Activated T-helper 1 cell treated with anti-CD3 and anti-CD28 coated beads, Interleukin-12 subunit alpha, Interleukin-12 subunit beta, Interleukin-2, Interleukin-4 antibody, amounts not matched to agents 30 ng/mL and 10 ng/mL and 1 ng/mL, durations not matched to agents 14 hours and 24 hours and 36 hours (primary cell): ENCODE measurements at regions of chr19 and their contacts with region 1.

Region 1: GRCh38 chr19:18542936-18543815 is at the start of gene FKBP8:
- DNase-seq: peak; percentile 92
- H3K4me3 Mint-ChIP-seq: peak within 1 kb of the TSS; percentile 92
- H3K27ac Mint-ChIP-seq: peak within 1 kb of the TSS; percentile 99
- H3K4me1 Mint-ChIP-seq: peaks cover 27% of the 10 kb centered on the region
- H3K27me3 Mint-ChIP-seq: peaks cover 4% of the 10 kb centered on the region
- total RNA-seq, gene FKBP8: 163 and 167 TPM in 2 replicates

Region 2: GRCh38 chr19:18496167-18496979 is 46.8 kb before region 1 on chr19:
- intact Hi-C with region 1: no loop called
- DNase-seq: peak; percentile 56
- H3K4me3 Mint-ChIP-seq: peak overlapping the region; percentile 64
- H3K27ac Mint-ChIP-seq: peak overlapping the region; percentile 80
- H3K4me1 Mint-ChIP-seq: peaks cover 63% of the 10 kb centered on the region
- H3K27me3 Mint-ChIP-seq: no peaks in the 10 kb centered on the region

Region 3: DNA sequence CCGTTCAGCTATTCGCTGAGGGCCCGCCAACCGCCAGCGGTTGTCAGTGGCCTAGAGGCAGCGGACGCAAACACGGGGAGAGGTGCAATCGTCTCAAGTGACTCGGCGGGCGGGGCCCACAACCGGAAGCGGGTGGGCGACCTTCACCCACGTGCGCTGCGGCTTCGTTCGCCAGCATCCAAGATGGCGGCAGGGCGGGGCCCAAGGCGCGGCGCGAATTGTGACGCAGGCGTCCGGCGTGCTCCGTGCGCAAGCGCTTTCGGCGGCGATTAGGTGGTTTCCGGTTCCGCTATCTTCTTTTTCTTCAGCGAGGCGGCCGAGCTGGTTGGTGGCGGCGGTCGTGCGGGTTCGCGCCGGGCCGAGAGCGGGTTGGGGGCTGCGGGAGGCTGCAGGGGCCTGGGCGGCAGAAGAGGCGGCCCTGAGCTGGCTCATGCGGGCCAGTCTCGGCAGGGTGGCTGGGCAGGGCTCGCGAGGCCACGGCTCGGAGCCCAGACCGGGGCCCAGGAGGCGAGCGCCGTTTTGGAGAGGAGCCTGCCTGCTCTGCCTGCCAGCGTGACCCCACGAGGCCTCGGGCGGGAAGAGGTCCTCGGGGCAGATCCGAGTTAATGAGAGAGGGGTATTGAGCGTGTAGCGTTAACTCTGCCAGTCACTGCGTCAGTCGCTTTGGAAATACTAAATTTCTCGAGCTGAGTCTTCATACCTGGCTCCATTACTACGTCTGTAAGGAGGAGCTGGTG is 28.6 kb after region 1 on chr19 and contains the start of gene UBA52:
- intact Hi-C with region 1: loop called (anchors 1 kb)
- DNase-seq: peak; percentile 99
- H3K4me3 Mint-ChIP-seq: peak within 1 kb of the TSS; percentile 91
- H3K27ac Mint-ChIP-seq: peak within 1 kb of the TSS; percentile 98
- H3K4me1 Mint-ChIP-seq: peaks cover 27% of the 10 kb centered on the region
- H3K27me3 Mint-ChIP-seq: no peaks in the 10 kb centered on the region
- total RNA-seq, gene UBA52: 1,472 and 1,500 TPM in 2 replicates